OCI-LY7 (cell line): ENCODE measurements at regions of chr12 and their contacts with region 1.

Region 1: DNA sequence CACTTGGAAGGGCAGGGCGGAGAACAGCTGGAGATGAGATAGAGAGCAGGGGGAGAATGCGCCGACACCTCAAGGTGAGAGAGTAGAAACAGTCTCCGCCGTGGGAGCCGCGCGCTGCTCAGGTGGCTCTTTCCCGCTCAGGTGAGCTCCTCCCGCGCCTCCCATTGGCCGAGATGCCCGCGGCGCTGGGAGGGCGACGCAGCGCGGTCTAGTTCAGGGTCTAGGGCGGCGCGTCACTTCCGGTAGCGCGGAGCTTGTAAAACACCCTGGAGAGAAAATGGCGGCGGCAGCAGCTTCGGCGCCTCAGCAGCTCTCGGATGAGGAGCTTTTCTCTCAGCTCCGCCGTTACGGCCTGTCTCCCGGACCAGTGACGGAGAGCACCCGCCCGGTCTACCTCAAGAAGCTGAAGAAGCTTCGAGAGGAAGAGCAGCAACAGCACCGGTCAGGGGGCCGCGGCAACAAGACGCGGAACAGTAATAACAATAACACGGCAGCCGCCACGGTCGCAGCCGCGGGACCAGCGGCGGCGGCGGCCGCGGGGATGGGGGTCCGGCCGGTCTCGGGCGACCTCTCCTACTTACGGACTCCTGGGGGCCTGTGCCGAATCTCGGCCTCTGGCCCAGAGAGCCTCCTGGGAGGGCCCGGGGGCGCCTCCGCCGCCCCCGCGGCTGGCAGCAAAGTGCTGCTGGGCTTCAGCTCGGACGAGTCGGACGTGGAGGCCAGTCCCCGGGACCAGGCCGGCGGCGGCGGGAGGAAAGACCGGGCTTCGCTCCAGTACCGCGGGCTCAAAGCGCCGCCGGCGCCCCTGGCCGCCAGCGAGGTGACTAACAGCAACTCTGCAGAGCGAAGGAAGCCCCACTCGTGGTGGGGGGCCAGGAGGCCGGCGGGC is at the start of gene LEMD3:
- DNase-seq: peak; percentile 95
- H3K4me3 ChIP-seq: peak within 1 kb of the TSS; percentile 95
- H3K27ac ChIP-seq: peak within 1 kb of the TSS; percentile 75
- H3K4me1 ChIP-seq: peaks cover 29% of the 10 kb centered on the region
- CTCF ChIP-seq: peak; percentile 29; the same call in 1 of the 2 replicates
- total RNA-seq, gene LEMD3: 45.5 and 58.0 TPM in 2 replicates

Region 2: GRCh38 chr12:65156366-65156841 is 13.2 kb before region 1 on chr12:
- CTCF ChIA-PET with region 1: no interaction called
- POLR2A ChIA-PET with region 1: interaction called, 20 read pairs
- intact Hi-C with region 1: no loop called
- DNase-seq: peak; percentile 34
- H3K4me3 ChIP-seq: no peak overlapping the region
- H3K27ac ChIP-seq: no peak overlapping the region
- H3K4me1 ChIP-seq: peaks cover 16% of the 10 kb centered on the region
- CTCF ChIP-seq: no peak

Region 3: GRCh38 chr12:65188179-65188701 is 18.7 kb after region 1 on chr12:
- CTCF ChIA-PET with region 1: no interaction called
- POLR2A ChIA-PET with region 1: interaction called, 24 read pairs
- intact Hi-C with region 1: no loop called
- DNase-seq: peak; percentile 13
- H3K4me3 ChIP-seq: peak overlapping the region; percentile 34
- H3K27ac ChIP-seq: peak overlapping the region; percentile 56
- H3K4me1 ChIP-seq: peaks cover 40% of the 10 kb centered on the region
- CTCF ChIP-seq: no peak

Region 4: GRCh38 chr12:65209655-65210043 is 40.1 kb after region 1 on chr12:
- CTCF ChIA-PET with region 1: no interaction called
- POLR2A ChIA-PET with region 1: interaction called, 13 read pairs
- intact Hi-C with region 1: loop called (anchors 2 kb)
- DNase-seq: peak; percentile 66
- H3K4me3 ChIP-seq: no peak overlapping the region
- H3K27ac ChIP-seq: no peak overlapping the region
- H3K4me1 ChIP-seq: peaks cover 43% of the 10 kb centered on the region
- CTCF ChIP-seq: no peak

Region 5: DNA sequence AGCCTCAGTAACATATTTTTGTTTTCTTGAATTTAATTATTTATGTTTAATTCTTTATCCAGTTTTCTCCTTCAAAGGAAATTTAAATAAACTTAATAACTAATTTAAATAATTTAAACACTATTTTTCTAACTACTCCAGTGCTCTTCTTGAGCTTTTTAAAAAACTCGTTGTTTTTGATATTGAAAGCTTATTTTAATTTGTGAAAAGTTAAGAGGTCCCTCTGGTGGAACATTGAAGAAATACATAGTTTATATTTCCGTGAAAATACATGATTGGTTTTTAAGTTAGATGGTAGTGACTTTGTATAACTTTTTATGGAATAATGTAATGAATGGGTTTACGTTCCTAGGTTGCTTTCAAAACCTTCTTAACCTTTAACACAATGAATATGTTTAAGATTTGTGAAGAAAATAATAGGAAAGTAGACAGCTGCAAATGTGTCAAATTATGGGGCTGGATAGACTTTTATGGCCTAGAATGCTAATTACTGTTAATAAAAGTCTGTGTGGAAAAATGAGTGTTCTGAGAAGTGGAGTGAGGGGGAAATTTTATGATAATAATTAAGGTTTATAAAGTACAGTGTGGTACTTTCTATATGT is 63.0 kb after region 1 on chr12:
- CTCF ChIA-PET with region 1: interaction called, 3 read pairs
- POLR2A ChIA-PET with region 1: interaction called, 13 read pairs
- intact Hi-C with region 1: loop called (anchors 1 kb)
- DNase-seq: peak; percentile 52
- H3K4me3 ChIP-seq: no peak overlapping the region
- H3K27ac ChIP-seq: no peak overlapping the region
- H3K4me1 ChIP-seq: no peaks in the 10 kb centered on the region
- CTCF ChIP-seq: peak; percentile 85